Left lung (tissue), 14 donors: ENCODE measurements at regions of chr1 and their contacts with region 1.

Region 1: DNA sequence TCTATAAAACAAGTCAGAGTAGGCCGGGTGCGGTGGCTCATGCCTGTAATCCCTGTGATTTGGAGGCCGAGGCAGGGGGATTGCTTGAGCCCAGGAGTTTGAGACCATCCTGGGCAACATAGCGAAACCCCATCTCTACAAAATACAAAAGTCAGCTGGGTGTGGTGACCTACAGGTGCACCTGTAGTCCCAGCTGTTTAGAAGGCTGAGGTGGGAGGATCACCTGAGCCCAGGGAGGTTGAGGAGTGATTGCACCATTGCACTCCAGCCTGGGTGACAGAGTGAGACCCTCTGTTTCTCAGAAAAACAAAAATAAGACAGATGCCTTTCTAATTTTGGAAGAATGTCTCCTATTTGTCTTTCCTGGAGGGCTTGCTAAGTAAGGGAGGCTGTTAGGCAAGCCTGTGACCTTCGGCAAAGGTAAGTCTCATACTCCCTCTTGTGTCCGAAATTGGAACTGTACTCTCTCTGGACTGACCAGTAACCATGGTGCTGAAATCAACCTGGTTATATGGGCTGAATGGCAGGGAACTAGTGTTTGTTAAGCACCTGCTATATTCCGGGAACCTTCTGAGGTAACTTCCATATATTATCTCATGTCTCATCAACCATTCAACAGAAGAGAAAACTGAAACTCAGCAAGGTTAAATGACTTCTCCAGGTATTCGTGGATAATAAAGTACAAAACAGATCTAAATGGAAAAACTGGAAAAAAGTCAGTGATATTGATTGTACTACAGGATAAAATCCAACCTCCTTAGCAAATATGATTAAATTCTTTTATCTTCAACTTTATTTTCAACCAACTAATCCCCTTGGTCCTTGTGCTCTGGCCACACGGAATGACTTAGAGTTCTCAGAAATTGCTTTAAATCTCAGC is 11.8 kb upstream of the RAB3B start:
- DNase-seq: peak in 2 of 4 donors; percentile 68 to 83
- ATAC-seq: peak; percentile 99
- H3K4me3 ChIP-seq: no peak overlapping the region
- H3K27ac ChIP-seq: no peak overlapping the region
- H3K4me1 ChIP-seq: no peaks in the 10 kb centered on the region
- H3K27me3 ChIP-seq: peaks cover 0 to 45% of the 10 kb centered on the region in 2 donors
- CTCF ChIP-seq: peak; percentile 89 to 95

Region 2: DNA sequence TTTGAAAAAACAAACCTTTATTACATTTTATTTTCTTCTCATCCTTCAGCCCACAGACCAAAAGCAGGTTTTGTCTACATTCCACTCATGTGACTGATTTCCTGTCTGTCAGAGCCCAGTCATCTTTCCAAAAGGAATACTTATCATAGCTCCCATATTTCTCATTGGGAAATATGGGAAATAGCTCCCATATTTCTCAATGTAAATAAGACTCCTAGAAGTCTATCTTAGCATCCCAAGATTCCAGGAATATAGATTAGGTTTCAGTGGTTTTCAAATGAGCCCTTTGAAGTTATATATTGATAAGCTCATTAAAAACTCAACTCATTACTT is 104.6 kb before region 1 on chr1:
- intact Hi-C with region 1: loop called in 1 of 2 experiments (anchors 5 kb)
- DNase-seq: no peak
- ATAC-seq: no peak
- H3K4me3 ChIP-seq: no peak overlapping the region
- H3K27ac ChIP-seq: no peak overlapping the region
- H3K4me1 ChIP-seq: no peaks in the 10 kb centered on the region
- H3K27me3 ChIP-seq: peaks cover 2 to 88% of the 10 kb centered on the region in 2 donors
- CTCF ChIP-seq: no peak